BJ (cell line): ENCODE measurements at regions of chr22 and their contacts with region 1.

Region 1: DNA sequence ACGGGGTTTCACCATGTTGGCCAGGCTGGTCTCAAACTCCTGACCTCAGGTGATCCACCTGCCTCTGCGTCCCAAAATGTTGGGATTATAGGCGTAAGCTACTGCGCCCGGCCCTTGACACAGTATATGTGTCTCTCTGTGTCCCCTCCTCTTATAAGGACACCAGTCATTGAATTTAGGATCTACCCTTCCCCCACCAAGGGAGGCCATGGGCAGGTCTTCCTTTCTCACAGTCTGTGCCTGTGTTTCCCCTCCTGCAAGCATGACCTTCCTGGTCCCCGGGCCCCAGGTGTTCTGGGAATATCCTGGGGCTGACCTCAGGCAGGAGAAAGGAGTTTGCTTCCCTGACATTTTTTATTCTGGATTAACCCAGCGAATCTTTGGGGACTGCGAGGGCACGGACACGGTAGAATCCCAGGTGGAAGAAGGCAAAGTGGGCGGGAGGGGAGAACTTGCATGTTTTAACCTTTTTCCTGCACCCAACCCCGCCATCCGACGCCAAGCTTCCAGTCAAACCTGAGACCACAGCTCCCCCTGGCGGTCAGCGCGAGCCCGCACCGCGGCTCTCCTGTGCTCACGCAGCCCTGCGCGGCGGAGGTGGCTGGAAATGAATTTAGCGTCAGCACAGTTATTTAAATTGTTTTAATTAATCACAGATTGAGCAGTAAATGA is 42.1 kb upstream of the ISX start:
- DNase-seq: no peak
- H3K4me3 ChIP-seq: no peak overlapping the region
- H3K27me3 ChIP-seq: no peaks in the 10 kb centered on the region
- CTCF ChIP-seq: peak; percentile 88

Region 2: GRCh38 chr22:33920927-33921524 is 1102.8 kb before region 1 on chr22:
- CTCF ChIA-PET with region 1: interaction called, 17 read pairs
- POLR2A ChIA-PET with region 1: no interaction called
- DNase-seq: peak; percentile 79
- H3K4me3 ChIP-seq: peak overlapping the region; percentile 56
- H3K27me3 ChIP-seq: no peaks in the 10 kb centered on the region; the same call in 1 of the 2 replicates
- CTCF ChIP-seq: no peak

Region 3: DNA sequence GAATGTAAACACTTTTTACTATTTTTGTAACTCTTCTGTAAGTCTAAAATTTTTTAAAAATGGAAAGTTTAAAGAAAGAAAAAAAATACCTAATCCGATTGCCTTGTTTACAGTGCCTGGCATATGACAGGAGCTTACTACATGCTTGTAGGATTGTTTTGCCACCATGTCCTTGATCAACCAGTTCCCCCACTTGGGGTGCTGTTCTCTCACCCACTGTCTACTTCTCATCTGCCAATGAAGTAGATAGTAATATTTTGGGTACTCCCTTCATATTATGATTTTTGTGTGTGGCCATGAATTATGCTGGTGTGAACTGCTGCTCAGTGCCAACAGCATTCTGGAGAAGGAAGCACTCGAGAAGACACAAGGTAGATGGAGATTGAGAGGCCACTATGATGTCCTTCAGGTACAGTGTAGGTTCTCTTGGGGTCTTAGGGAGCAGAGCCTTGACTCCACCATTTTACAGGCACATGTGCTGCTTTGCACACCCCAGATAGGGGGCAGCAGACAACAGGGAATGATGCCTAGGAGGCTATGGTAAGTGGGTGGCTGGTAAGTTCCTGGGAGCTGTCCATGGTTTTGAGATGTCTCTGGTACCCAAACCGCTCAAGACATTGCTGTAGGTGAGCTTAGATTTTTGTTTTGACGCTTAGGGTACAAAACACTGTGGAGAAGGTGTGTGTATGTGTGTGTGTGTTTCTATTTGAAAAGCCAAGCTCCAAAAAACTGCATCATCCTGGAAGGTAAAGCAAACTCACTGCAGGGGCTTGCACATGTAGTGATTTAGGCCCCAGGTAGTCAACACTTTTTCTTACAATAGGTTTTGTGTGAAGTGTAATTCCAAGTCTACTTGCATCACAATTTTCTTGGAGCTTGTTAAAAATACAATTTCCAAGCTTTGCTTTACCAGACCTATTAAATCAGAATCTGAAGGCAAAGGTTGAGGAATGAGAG is 609.1 kb before region 1 on chr22:
- CTCF ChIA-PET with region 1: interaction called, 12 read pairs
- POLR2A ChIA-PET with region 1: no interaction called
- DNase-seq: no peak
- H3K4me3 ChIP-seq: no peak overlapping the region
- H3K27me3 ChIP-seq: no peaks in the 10 kb centered on the region
- CTCF ChIP-seq: no peak

Region 4: GRCh38 chr22:34858066-34858465 is 165.8 kb before region 1 on chr22:
- CTCF ChIA-PET with region 1: no interaction called
- POLR2A ChIA-PET with region 1: no interaction called
- DNase-seq: no peak
- H3K4me3 ChIP-seq: no peak overlapping the region
- H3K27me3 ChIP-seq: no peaks in the 10 kb centered on the region
- CTCF ChIP-seq: no peak

Region 5: GRCh38 chr22:34986523-34986922 is 37.3 kb before region 1 on chr22:
- CTCF ChIA-PET with region 1: no interaction called
- POLR2A ChIA-PET with region 1: no interaction called
- DNase-seq: no peak
- H3K4me3 ChIP-seq: no peak overlapping the region
- H3K27me3 ChIP-seq: no peaks in the 10 kb centered on the region
- CTCF ChIP-seq: no peak